ENCODE measurements at regions of chr7 and their contacts with region 1.

Region 1: DNA sequence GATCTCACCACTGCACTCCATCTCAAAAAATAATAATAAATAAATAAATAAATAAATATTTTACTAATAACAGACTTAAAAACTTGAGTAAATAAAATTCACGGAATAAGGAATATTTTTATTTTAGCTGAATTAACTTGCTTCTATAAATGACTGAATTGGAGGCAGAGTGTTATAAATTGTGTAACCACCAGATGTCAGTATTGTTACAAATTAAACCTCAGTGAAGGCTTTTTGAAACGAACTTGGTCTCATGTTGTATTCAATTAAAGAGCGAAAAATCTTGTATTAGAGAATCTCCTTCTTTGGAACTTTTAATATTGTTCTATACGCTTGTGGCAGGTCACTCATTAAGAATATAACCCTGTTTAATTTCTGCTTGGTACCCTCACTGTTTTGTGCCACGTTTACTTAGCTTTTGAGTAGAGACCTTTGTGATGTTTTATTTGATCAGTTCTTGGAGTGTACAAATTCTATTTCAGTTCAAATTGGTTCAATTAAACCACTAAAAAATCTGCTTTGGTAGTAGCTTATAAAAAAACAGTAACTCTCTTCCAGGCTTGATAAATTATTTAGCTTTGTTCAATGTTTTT is 45.6 kb upstream of the SCIN start:
- DNase-seq: no peak

Region 2: DNA sequence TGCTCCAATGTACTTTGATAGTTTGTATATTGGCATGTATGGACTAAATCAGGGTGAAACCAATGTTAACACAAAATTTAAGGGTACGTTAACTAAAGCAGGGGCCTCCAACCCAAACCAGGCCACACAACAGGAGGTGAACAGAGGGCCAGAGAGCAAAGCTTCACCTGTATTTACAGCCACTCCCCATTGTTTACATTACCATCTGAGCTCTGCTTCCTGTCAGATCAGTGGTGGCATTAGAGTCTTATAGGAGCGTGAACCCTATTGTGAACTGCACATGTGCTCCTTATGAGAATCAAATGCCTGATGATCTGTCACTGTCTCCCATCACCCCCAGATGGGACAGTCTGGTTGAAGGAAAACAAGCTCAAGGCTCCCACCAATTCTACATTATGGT is 16.3 kb before region 1 on chr7:
- intact Hi-C with region 1: no loop called
- DNase-seq: no peak

Region 3: DNA sequence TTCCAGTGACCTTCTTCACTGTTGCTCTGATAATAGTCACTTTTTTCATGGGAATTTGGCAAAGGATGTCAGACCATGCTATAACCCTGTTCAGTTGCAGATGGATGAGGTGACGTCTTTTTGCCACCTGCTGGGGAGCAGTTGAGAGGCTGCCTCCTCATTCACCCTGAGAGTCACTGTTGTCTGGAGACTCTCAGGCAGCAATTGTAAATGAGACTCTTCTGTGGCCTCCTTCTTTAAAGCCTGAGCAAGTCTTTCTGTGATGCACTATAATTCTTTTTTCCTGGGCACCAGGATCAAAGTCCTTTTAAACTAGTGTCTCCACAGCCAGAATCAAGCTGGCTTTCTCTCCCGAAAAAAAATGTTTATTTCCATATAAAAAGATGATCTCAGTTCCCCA is 507.7 kb after region 1 on chr7:
- intact Hi-C with region 1: no loop called
- DNase-seq: no peak

Region 4: GRCh38 chr7:13262929-13263530 is 738.1 kb after region 1 on chr7:
- intact Hi-C with region 1: loop called in 1 of 2 experiments (anchors 5 kb)
- DNase-seq: no peak